Left cardiac atrium (tissue), 4 donors: ENCODE measurements at regions of chr1 and their contacts with region 1.

Region 1: GRCh38 chr1:183281553-183282091 is 95.6 kb downstream of the LAMC2 start:
- DNase-seq: peak; percentile 90
- ATAC-seq: peak; percentile 83 to 85

Region 2: GRCh38 chr1:183209533-183210158 is 72.0 kb before region 1 on chr1:
- intact Hi-C with region 1: no loop called
- DNase-seq: no peak
- ATAC-seq: peak; percentile 25 to 93

Region 3: GRCh38 chr1:183318433-183318832 is 36.8 kb after region 1 on chr1:
- intact Hi-C with region 1: loop called in 1 of 2 experiments (anchors 1 kb)
- DNase-seq: peak; percentile 87
- ATAC-seq: peak; percentile 96 to 98

Region 4: DNA sequence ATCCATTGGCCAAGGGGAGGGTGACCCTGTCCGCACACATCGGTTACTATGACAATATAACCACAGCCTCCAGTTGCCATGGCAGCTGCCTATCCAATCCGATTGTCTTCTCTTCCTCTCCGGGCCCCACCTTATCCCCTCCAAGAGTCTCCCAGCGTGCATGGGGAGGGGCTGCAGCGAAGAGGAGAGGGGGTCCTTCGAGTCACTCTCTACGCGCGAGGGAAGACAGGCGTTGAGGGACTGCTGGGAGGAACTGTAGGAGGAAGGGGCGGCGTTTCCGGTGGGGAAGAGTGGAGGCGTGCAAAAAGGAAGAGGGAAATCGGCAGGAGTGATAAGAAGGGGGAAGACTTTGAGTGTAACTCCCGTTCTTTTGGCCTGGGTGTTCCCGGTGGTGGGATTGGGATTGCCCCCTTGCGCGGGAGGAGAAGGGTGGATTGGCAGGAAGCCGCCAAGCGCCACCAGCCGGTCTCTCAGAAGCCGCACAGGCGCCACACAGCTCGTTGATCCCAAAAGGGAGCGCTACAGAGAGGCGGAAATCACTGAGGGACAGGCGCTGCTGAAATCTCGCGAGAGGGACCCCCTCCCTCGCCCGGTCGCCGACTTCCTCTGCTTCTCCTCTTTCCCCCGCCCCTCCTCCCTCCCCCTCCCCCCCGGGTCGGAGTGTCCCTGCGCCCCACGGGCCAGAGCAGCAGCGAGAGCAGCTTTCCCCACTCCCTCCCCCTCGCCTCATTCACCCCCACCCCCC is 190.3 kb after region 1 on chr1:
- intact Hi-C with region 1: loop called (anchors 10 kb)
- DNase-seq: peak; percentile 97
- ATAC-seq: peak; percentile 88

Region 5: GRCh38 chr1:183543619-183544204 is 262.1 kb after region 1 on chr1:
- intact Hi-C with region 1: loop called in 1 of 2 experiments (anchors 10 kb)
- DNase-seq: no peak
- ATAC-seq: peak; percentile 83 to 86

Region 6: DNA sequence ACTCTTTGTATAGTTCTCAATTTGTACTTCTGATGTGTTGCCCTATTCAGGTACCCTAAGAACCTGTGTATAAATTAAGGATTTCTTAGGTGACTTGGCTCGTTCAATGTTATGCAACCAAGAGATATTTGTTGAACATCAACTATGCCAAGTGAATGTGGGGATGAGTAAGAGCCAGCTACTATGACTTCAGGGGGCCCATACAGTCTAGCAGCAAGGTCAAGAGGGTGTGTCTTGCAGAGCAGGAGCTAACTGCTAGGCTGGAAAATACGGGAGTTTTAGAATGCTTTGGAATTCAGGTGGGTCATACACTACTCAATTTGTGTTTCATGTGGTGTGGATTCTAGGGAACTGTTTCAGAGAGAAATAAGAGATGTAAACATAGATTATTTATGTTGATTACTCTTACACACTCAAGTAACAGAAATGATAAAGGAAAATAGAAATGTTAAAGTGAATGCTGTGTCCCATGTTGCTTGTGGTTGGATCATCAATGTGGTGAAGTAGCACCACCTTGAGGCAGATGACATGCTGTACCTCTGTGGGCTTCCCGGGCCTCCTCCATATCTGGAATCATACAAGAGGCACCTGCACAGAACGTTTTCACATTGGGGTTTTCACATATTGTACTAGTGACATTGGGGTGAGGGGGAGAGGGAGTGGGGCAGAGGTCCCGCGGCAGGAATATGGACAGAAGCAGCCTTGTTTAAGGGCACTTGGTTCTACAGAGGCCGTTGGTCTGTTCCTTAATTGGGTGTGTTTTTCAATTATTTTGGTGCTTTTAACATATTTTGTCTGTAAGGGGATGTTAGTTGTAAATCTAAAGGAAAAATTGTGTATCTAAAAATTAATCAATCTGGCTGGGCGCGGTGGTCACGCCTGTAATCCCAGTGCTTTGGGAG is 341.5 kb after region 1 on chr1:
- intact Hi-C with region 1: loop called in 1 of 2 experiments (anchors 5 kb)
- DNase-seq: peak; percentile 29
- ATAC-seq: peak; percentile 88 to 93